Endothelial cell of umbilical vein (primary cell): ENCODE measurements at regions of chr15 and their contacts with region 1.

Region 1: DNA sequence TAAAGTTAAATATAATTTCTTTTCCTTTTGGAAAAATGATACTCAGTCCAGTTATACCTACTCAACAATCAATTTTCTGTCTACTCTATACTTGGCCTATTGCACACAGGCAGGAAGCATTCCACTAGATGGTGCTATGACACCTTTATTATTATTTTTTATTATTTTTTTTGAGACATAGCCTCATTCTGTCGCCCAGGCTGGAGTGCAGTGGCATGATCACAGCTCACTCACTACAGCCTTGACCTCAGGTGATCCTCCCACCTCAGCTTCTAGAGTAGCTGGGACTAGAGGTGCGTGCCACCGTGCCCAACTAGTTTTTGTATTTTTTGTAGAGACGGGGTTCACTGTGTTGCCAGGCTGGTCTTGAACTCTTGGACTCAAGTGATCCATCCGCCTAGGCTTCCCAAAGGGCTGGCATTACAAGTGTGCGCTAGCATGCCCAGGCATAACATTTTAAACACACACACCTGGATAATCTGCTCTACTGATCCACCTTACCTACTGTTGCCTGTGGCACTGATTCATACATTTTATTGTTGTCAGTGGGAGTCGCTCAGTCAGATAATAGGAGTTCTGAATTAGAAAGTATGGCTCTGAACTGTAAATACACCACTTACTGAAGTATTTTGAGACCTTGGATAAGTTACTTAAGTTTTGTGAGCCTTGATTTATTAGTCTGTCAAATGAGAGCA is 56.2 kb downstream of the EIF3J start:
- DNase-seq: no peak
- H3K4me3 ChIP-seq: no peak overlapping the region
- H3K27ac ChIP-seq: no peak overlapping the region
- H3K4me1 ChIP-seq: peaks cover 10% of the 10 kb centered on the region
- H3K27me3 ChIP-seq: no peaks in the 10 kb centered on the region
- CTCF ChIP-seq: peak; percentile 39 to 47
- POLR2A ChIP-seq: no peak

Region 2: DNA sequence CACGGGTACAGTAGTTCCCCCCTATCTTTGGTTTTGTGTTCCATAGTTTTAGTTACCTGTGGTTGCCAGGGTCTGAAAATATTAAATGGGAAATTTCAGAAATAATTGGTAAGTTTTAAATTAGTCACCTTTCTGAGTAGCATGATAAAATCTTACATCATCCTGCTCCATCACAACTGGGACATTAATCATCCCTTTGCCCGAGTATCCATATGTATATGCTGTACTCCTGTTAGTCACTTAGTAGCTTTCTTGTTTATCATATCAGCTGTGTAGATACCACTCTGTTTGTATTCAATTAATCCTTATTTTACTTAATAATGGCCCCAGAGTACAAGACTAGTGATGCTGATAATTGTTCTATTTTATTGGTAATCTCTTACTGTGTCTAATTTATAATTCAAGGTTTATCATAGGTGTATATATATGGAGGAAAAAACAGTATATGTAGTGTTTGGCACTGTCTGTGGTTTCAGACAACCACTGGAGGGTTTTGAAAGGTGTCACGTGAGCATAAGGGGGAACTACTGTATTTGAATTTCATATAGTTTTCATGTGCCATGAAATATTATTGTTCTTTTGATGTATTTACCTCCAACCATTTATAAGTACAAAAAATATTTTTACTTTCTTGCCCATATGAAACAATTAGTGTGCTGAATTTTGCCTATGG is 124.3 kb before region 1 on chr15:
- CTCF ChIA-PET with region 1: no interaction called
- POLR2A ChIA-PET with region 1: no interaction called
- dilution Hi-C with region 1: no loop called
- intact Hi-C with region 1: no loop called
- DNase-seq: peak; percentile 29
- H3K4me3 ChIP-seq: no peak overlapping the region
- H3K27ac ChIP-seq: no peak overlapping the region
- H3K4me1 ChIP-seq: no peaks in the 10 kb centered on the region
- H3K27me3 ChIP-seq: no peaks in the 10 kb centered on the region
- CTCF ChIP-seq: no peak
- POLR2A ChIP-seq: no peak

Region 3: DNA sequence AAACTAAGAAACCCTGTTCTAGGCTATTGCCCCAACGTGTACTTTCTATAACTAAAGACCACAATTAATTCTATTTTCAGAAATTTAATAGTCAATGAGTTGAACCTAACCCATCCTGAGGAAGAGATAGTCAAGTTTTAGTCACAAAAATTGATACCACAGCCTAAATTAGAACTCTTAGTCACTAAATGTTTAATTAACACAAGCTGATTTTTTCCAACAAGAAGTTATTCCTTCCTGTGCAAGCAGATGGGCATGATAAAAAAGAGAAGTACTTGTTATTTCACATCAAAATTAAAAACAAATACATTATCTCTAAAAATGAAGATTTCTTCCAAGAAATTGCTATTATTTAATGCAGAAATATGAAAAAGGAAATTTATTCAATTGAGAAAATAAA is 324.9 kb after region 1 on chr15:
- CTCF ChIA-PET with region 1: no interaction called
- POLR2A ChIA-PET with region 1: no interaction called
- dilution Hi-C with region 1: no loop called
- intact Hi-C with region 1: loop called (anchors 5 kb)
- DNase-seq: no peak
- H3K4me3 ChIP-seq: no peak overlapping the region
- H3K27ac ChIP-seq: no peak overlapping the region
- H3K4me1 ChIP-seq: no peaks in the 10 kb centered on the region
- H3K27me3 ChIP-seq: no peaks in the 10 kb centered on the region
- CTCF ChIP-seq: no peak
- POLR2A ChIP-seq: no peak